ENCODE measurements at regions of chr19 and their contacts with region 1.

Region 1: DNA sequence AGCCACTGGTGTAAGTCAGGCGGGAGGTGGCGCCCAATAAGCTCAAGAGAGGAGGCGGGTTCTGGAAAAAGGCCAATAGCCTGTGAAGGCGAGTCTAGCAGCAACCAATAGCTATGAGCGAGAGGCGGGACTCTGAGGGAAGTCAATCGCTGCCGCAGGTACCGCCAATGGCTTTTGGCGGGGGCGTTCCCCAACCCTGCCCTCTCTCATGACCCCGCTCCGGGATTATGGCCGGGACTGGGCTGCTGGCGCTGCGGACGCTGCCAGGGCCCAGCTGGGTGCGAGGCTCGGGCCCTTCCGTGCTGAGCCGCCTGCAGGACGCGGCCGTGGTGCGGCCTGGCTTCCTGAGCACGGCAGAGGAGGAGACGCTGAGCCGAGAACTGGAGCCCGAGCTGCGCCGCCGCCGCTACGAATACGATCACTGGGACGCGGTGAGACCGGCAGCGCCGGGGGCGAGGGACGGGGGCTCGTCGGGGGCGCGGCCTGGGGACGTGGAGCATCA is at the start of gene ALKBH7:
- DNase-seq: peak; percentile 98 to 100
- H3K4me3 ChIP-seq: peak within 1 kb of the TSS; percentile 75 to 88
- H3K27ac ChIP-seq: peak within 1 kb of the TSS; percentile 93 to 99
- H3K4me1 ChIP-seq: peaks cover 3 to 5% of the 10 kb centered on the region in 2 donors
- H3K27me3 ChIP-seq: no peaks in the 10 kb centered on the region
- CTCF ChIP-seq: no peak
- total RNA-seq, gene ALKBH7: 68.8 TPM

Region 2: GRCh38 chr19:5977785-5978605 is 394.6 kb before region 1 on chr19 and contains the start of gene RANBP3:
- intact Hi-C with region 1: loop called (anchors 2 kb)
- DNase-seq: peak; percentile 95 to 99
- H3K4me3 ChIP-seq: peak within 1 kb of the TSS; percentile 84 to 97
- H3K27ac ChIP-seq: peak within 1 kb of the TSS; percentile 87 to 96
- H3K4me1 ChIP-seq: peaks cover 18 to 35% of the 10 kb centered on the region in 2 donors
- H3K27me3 ChIP-seq: no peaks in the 10 kb centered on the region
- CTCF ChIP-seq: no peak
- total RNA-seq, gene RANBP3: 48.0 TPM

Region 3: DNA sequence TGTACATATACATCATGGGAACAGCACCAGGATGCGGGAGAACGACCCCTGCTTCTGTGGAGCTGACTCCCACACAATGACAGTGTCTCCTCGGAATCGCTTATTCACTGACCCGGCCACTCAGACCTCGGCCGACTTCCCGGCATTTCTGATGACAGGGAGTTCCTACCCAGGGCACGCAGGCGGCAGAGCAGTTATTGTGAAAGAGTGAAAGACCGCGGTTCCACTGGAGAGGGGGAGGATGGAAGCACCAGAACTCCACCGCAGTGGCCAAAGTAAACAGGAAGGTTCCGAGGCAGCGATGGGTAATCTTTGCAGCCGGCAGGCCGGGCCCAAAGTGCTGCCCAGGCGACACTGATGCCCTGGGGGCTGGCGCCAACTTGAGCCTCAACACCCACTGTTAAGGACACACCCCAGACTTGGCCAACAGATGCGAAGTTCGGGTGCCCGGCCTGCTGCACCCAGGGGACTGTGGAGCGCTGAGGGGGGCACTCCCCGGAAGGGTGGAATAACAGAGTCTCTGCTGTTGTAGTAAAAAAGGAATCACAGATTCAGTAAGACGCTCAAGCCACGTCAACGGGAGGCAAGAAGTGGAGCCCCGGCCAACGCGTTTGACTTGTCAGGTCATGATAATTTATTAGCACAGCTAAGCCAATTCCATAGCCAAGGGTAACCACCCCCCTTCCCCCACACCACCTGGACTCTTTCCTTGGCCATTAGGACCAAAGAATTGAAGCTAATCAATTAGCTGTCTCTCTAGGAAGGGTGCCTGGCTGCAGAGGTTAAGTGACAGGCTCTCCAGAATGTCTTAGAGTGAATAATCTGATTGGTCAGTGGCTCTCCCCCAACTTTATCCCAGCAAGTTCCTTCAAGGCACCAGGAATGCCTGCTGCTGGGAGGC is 98.7 kb before region 1 on chr19:
- intact Hi-C with region 1: loop called (anchors 2 kb)
- DNase-seq: peak; percentile 79 to 98
- H3K4me3 ChIP-seq: peak overlapping the region; percentile 31 to 45
- H3K27ac ChIP-seq: peak overlapping the region; percentile 90 to 92
- H3K4me1 ChIP-seq: peaks cover 30 to 69% of the 10 kb centered on the region in 2 donors
- H3K27me3 ChIP-seq: no peaks in the 10 kb centered on the region
- CTCF ChIP-seq: no peak

Region 4: GRCh38 chr19:6393074-6393983 is 20.7 kb after region 1 on chr19 and contains the start of gene GTF2F1:
- intact Hi-C with region 1: loop called (anchors 1 kb)
- DNase-seq: peak; percentile 76 to 97
- H3K4me3 ChIP-seq: peak within 1 kb of the TSS; percentile 74 to 75
- H3K27ac ChIP-seq: peak within 1 kb of the TSS; percentile 94
- H3K4me1 ChIP-seq: peaks cover 9 to 14% of the 10 kb centered on the region in 2 donors
- H3K27me3 ChIP-seq: no peaks in the 10 kb centered on the region
- CTCF ChIP-seq: peak in 1 of 3 experiments; percentile 25
- total RNA-seq, gene GTF2F1: 67.9 TPM

Region 5: DNA sequence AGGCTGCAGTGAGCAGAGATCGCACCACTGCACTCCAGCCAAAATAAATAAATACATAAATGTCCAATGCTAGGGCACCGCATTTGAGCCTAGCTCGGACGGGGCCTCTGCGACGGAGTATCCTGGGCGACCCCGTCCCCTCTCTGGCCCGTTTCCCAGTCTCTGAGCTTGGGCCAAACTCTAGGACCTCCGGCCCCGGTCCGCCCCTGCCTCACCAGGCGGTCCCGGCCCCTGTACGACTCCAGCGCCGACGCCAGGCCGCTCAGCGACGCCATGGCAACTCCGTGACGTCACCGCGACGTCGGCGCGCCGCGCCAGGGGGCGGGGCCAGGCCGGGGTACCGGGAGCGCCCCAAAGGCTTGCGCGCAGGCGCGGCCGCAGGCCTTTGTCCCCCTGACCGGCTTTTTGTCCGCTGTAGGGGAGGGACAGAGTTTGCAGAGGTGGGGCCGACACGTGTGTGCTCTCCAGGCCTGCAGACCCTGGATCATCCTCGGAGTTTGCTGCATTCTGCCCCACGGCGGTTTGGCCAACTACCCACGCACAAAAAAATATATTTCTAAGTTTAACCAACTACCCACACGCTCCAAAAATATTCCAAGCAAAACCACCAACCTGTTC is 1116.2 kb after region 1 on chr19 and contains the start of gene PEX11G:
- intact Hi-C with region 1: loop called (anchors 5 kb)
- DNase-seq: peak; percentile 37 to 93
- H3K4me3 ChIP-seq: peak within 1 kb of the TSS; percentile 73 to 84
- H3K27ac ChIP-seq: peak within 1 kb of the TSS; percentile 70 to 84
- H3K4me1 ChIP-seq: peaks cover 0 to 4% of the 10 kb centered on the region in 2 donors
- H3K27me3 ChIP-seq: no peaks in the 10 kb centered on the region
- CTCF ChIP-seq: no peak
- total RNA-seq, gene PEX11G: not detected